ENCODE measurements at regions of chr12 and their contacts with region 1.

Region 1: GRCh38 chr12:78290606-78291345 is 460.1 kb downstream of the NAV3 start:
- DNase-seq: peak; percentile 90
- H3K4me3 Mint-ChIP-seq: peak overlapping the region; percentile 9
- H3K27ac Mint-ChIP-seq: peak overlapping the region; percentile 94
- H3K4me1 Mint-ChIP-seq: peaks cover 25% of the 10 kb centered on the region
- H3K27me3 Mint-ChIP-seq: no peaks in the 10 kb centered on the region
- CTCF ChIP-seq: no peak

Region 2: DNA sequence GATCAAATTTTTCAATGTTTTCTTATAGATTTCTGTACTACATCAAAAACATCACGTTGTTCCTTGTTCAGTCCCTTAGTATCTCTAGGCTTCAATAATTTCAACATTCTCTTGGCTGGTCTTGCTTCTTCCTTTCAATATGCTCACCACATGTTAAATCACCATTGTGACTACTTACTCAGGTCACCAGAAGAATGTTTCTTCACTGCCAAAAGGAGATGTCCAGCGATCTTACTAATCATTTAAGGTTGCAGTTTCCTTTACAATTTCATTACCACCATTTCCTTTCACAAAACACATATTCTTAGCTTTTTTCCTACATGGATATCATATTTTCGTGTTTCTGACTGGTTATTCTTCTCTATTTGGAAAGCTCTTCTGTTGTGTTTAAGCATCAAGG is 96.3 kb before region 1 on chr12:
- CTCF ChIA-PET with region 1: interaction called, 3 read pairs
- POLR2A ChIA-PET with region 1: no interaction called
- intact Hi-C with region 1: loop called (anchors 5 kb)
- DNase-seq: peak; percentile 76
- H3K4me3 Mint-ChIP-seq: peak overlapping the region; percentile 35
- H3K27ac Mint-ChIP-seq: peak overlapping the region; percentile 79
- H3K4me1 Mint-ChIP-seq: peaks cover 36% of the 10 kb centered on the region
- H3K27me3 Mint-ChIP-seq: no peaks in the 10 kb centered on the region
- CTCF ChIP-seq: no peak

Region 3: DNA sequence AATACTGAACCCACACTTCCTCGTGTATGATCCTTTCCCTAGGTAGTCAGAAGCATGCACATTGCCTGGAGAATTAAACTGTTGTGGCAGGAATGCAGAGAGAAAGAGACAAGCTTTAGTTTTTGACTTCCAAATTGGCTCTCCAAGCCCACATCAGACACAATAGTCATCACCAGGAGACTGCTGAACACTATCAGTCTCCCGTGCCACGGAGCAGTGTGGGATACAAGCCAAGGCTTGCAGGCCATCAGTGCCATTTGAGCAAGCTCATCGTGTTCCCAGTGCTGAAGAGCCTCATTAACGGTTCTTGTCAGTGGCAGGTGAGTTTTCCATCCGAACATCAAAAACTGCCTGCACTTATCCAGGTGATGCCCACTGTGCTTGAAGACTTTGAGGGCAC is 49.3 kb before region 1 on chr12:
- CTCF ChIA-PET with region 1: no interaction called
- POLR2A ChIA-PET with region 1: no interaction called
- intact Hi-C with region 1: no loop called
- DNase-seq: no peak
- H3K4me3 Mint-ChIP-seq: no peak overlapping the region
- H3K27ac Mint-ChIP-seq: no peak overlapping the region
- H3K4me1 Mint-ChIP-seq: no peaks in the 10 kb centered on the region
- H3K27me3 Mint-ChIP-seq: no peaks in the 10 kb centered on the region
- CTCF ChIP-seq: no peak

Measured in MCF 10A (cell line).